ENCODE measurements at regions of chr6 and their contacts with region 1.

Region 1: DNA sequence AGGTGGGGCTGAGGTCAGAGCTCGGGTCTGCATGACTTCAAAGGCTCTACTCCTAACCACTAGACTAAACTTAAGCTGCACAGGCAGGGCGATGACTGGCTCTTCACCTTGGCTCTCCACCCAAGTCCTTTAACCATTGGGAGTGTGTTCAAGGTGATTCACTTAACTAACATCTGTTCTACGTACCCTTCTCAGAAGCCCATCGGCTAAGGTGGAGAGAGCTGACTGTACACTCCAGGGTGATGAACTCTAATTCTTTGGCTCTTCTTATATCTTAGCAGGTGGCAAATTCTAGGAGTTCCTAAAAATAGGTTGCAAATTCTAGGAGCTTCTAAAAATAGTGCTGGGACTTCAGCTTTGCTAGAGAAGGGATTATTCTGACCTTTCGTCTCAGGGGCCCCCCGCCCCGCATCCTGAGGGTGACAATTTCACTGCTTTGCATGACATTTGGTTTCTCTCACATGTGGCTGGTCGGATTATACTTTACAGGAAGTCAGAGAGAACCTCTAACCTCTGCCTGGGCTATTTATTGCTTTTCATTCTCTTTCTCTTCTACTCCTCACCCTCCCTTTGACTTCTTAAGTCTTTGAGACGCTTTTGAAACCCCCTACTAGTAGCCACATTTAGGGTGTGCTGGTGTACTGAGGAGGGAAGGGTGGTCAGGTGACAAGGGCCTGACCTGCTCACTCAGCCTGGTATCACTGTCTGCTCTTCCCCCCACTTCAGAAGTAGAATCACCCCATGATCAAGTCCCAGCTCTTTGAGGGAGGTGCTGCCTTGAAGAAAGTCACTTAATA is 55.5 kb downstream of the PRDM1 start:
- DNase-seq: peak; percentile 85
- ATAC-seq: peak; percentile 76
- H3K4me3 ChIP-seq: no peak overlapping the region
- H3K27ac ChIP-seq: peak overlapping the region; percentile 91
- H3K4me1 ChIP-seq: peaks cover 63% of the 10 kb centered on the region
- H3K27me3 ChIP-seq: no peaks in the 10 kb centered on the region
- CTCF ChIP-seq: no peak
- EP300 ChIP-seq: peak in 1 of 2 experiments; percentile 77; a peak in 2 of 4 replicates
- POLR2A ChIP-seq: no peak
- RAD21 ChIP-seq: peak; percentile 46

Region 2: GRCh38 chr6:106072501-106073090 is 69.0 kb before region 1 on chr6:
- CTCF ChIA-PET with region 1: no interaction called
- POLR2A ChIA-PET with region 1: no interaction called
- RAD21 ChIA-PET with region 1: no interaction called
- SMC1A ChIA-PET with region 1: no interaction called
- in situ Hi-C with region 1: no loop called
- intact Hi-C with region 1: no loop called
- DNase-seq: no peak
- ATAC-seq: no peak
- H3K4me3 ChIP-seq: no peak overlapping the region
- H3K27ac ChIP-seq: no peak overlapping the region
- H3K4me1 ChIP-seq: no peaks in the 10 kb centered on the region
- H3K27me3 ChIP-seq: peaks cover 2 to 5% of the 10 kb centered on the region in 2 experiments; a peak in 2 of 4 replicates
- CTCF ChIP-seq: no peak
- EP300 ChIP-seq: no peak
- POLR2A ChIP-seq: no peak
- RAD21 ChIP-seq: no peak

Region 3: GRCh38 chr6:106097411-106098231 is 44.0 kb before region 1 on chr6:
- CTCF ChIA-PET with region 1: interaction called, 8 read pairs
- POLR2A ChIA-PET with region 1: interaction called, 3 read pairs
- RAD21 ChIA-PET with region 1: interaction called, 9 read pairs
- SMC1A ChIA-PET with region 1: interaction called, 38 read pairs
- in situ Hi-C with region 1: no loop called
- intact Hi-C with region 1: loop called (anchors 2 kb)
- DNase-seq: peak; percentile 78
- ATAC-seq: peak; percentile 68
- H3K4me3 ChIP-seq: peak overlapping the region; percentile 72
- H3K27ac ChIP-seq: peak overlapping the region; percentile 80
- H3K4me1 ChIP-seq: peaks cover 34% of the 10 kb centered on the region
- H3K27me3 ChIP-seq: no peaks in the 10 kb centered on the region
- CTCF ChIP-seq: no peak
- EP300 ChIP-seq: peak; percentile 65 to 68
- POLR2A ChIP-seq: no peak
- RAD21 ChIP-seq: no peak

Region 4: DNA sequence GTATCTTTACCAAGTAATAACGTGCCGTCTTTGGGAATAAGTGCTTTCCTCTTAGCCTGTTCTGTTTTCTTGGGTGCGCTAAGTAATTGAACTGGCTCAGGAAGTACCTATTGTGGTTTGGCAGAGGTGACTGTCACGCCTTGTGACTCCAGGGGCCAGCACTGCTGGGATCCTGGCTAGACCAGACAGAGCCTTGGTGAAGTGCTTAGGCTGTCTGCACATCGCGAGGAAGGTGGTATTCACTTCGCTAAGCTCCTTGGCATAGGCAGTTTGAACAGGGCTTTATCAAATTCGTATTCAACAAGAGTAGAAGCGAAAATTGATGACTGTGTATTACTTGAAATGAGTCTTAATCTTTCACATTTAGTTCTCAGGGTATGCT is 37.9 kb before region 1 on chr6:
- CTCF ChIA-PET with region 1: interaction called, 8 read pairs
- POLR2A ChIA-PET with region 1: interaction called, 3 read pairs
- RAD21 ChIA-PET with region 1: interaction called, 5 read pairs
- SMC1A ChIA-PET with region 1: interaction called, 38 read pairs
- in situ Hi-C with region 1: no loop called
- intact Hi-C with region 1: loop called (anchors 2 kb)
- DNase-seq: no peak
- ATAC-seq: peak; percentile 56
- H3K4me3 ChIP-seq: 0 out of 2 replicates have a peak overlapping the region, but pooled peaks have one; percentile 6
- H3K27ac ChIP-seq: 0 out of 2 replicates have a peak overlapping the region, but pooled peaks have one; percentile 15
- H3K4me1 ChIP-seq: peaks cover 46% of the 10 kb centered on the region
- H3K27me3 ChIP-seq: no peaks in the 10 kb centered on the region; a peak in 1 of 4 replicates
- CTCF ChIP-seq: no peak
- EP300 ChIP-seq: no peak
- POLR2A ChIP-seq: no peak
- RAD21 ChIP-seq: no peak

Region 5: GRCh38 chr6:106114492-106115265 is 27.0 kb before region 1 on chr6:
- CTCF ChIA-PET with region 1: interaction called, 6 read pairs
- POLR2A ChIA-PET with region 1: interaction called, 3 read pairs
- RAD21 ChIA-PET with region 1: interaction called, 13 read pairs
- SMC1A ChIA-PET with region 1: interaction called, 15 read pairs
- in situ Hi-C with region 1: no loop called
- intact Hi-C with region 1: no loop called
- DNase-seq: peak; percentile 62
- ATAC-seq: peak; percentile 92
- H3K4me3 ChIP-seq: 0 out of 2 replicates have a peak overlapping the region, but pooled peaks have one; percentile 2
- H3K27ac ChIP-seq: peak overlapping the region; percentile 63
- H3K4me1 ChIP-seq: peaks cover 44% of the 10 kb centered on the region
- H3K27me3 ChIP-seq: peaks cover 0 to 2% of the 10 kb centered on the region in 2 experiments; a peak in 1 of 4 replicates
- CTCF ChIP-seq: no peak; a peak in 1 of 6 replicates
- EP300 ChIP-seq: peak in 1 of 2 experiments; percentile 52; a peak in 1 of 4 replicates
- POLR2A ChIP-seq: no peak
- RAD21 ChIP-seq: no peak

Region 6: GRCh38 chr6:106125925-106126435 is 15.7 kb before region 1 on chr6:
- CTCF ChIA-PET with region 1: interaction called, 13 read pairs
- POLR2A ChIA-PET with region 1: interaction called, 9 read pairs
- RAD21 ChIA-PET with region 1: interaction called, 13 read pairs
- SMC1A ChIA-PET with region 1: interaction called, 16 read pairs
- in situ Hi-C with region 1: no loop called
- intact Hi-C with region 1: no loop called
- DNase-seq: peak; percentile 62
- ATAC-seq: peak; percentile 75
- H3K4me3 ChIP-seq: peak overlapping the region; percentile 38; the same call in 1 of the 2 replicates
- H3K27ac ChIP-seq: peak overlapping the region; percentile 55
- H3K4me1 ChIP-seq: peaks cover 46% of the 10 kb centered on the region
- H3K27me3 ChIP-seq: peaks cover 0 to 2% of the 10 kb centered on the region in 2 experiments; a peak in 1 of 4 replicates
- CTCF ChIP-seq: no peak
- EP300 ChIP-seq: no peak
- POLR2A ChIP-seq: no peak
- RAD21 ChIP-seq: no peak

Region 7: GRCh38 chr6:106155219-106155830 is 13.7 kb after region 1 on chr6:
- CTCF ChIA-PET with region 1: interaction called, 27 read pairs
- POLR2A ChIA-PET with region 1: interaction called, 3 read pairs
- RAD21 ChIA-PET with region 1: interaction called, 6 read pairs
- SMC1A ChIA-PET with region 1: interaction called, 217 read pairs
- in situ Hi-C with region 1: no loop called
- intact Hi-C with region 1: no loop called
- DNase-seq: no peak
- ATAC-seq: no peak
- H3K4me3 ChIP-seq: no peak overlapping the region
- H3K27ac ChIP-seq: no peak overlapping the region
- H3K4me1 ChIP-seq: no peaks in the 10 kb centered on the region
- H3K27me3 ChIP-seq: no peaks in the 10 kb centered on the region
- CTCF ChIP-seq: no peak
- EP300 ChIP-seq: no peak
- POLR2A ChIP-seq: no peak
- RAD21 ChIP-seq: no peak

Region 8: GRCh38 chr6:106181664-106182418 is 40.2 kb after region 1 on chr6:
- CTCF ChIA-PET with region 1: interaction called, 17 read pairs
- POLR2A ChIA-PET with region 1: interaction called, 14 read pairs
- RAD21 ChIA-PET with region 1: interaction called, 17 read pairs
- SMC1A ChIA-PET with region 1: interaction called, 145 read pairs
- in situ Hi-C with region 1: no loop called
- intact Hi-C with region 1: loop called (anchors 1 kb)
- DNase-seq: peak; percentile 40
- ATAC-seq: peak; percentile 57
- H3K4me3 ChIP-seq: no peak overlapping the region
- H3K27ac ChIP-seq: peak overlapping the region; percentile 74
- H3K4me1 ChIP-seq: peaks cover 45% of the 10 kb centered on the region
- H3K27me3 ChIP-seq: no peaks in the 10 kb centered on the region
- CTCF ChIP-seq: no peak
- EP300 ChIP-seq: no peak
- POLR2A ChIP-seq: no peak
- RAD21 ChIP-seq: no peak

Measured in GM12878 (cell line).